ENCODE measurements at regions of chr19 and their contacts with region 1.

Region 1: GRCh38 chr19:12035220-12036153 is at the start of gene ZNF433:
- DNase-seq: no peak
- ATAC-seq: peak; percentile 100
- H3K4me3 ChIP-seq: peak within 1 kb of the TSS; percentile 69 to 70
- H3K27ac ChIP-seq: peak within 1 kb of the TSS; percentile 84
- H3K4me1 ChIP-seq: peaks cover 4% of the 10 kb centered on the region; the same call in 1 of the 2 replicates
- H3K27me3 ChIP-seq: no peaks in the 10 kb centered on the region
- CTCF ChIP-seq: no peak
- total RNA-seq, gene ZNF433: 4.7 TPM

Region 2: DNA sequence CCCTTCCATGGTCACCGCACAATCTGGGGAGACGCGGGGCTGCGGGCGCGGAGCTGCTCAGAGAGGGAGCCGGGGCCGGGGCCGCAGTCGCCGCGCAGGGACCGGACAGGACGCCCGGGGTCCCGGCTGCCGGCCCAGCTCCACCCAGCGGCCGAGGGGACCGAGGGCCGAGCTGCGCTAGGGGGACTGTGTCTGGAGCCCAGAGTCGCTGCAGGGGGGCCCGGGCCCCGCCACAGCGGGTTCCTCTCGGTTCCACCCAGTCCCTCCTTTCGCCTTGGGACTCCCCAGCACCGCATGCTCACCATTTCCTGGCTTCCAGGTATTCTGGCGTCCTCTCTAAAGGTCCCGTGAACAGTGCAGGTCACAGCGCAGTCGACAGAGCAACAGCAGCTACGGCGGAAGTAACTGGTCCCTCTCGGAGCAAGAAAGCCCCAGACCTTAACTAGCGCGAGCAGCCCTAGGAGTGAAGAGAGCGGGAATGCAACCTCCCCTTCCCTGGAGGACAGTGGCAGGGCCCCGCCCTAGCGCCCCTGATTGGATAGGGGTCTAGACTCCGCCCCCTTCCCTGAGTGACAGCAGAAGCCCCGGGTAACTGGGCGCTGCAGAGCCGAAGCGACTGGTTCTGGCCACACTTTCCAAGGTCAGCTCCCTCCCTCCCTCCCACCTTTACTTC is 17.1 kb after region 1 on chr19 and contains the start of gene ZNF878:
- CTCF ChIA-PET with region 1: interaction called, 12 read pairs
- POLR2A ChIA-PET with region 1: no interaction called
- in situ Hi-C with region 1: no loop called
- intact Hi-C with region 1: no loop called
- DNase-seq: no peak
- ATAC-seq: peak; percentile 100
- H3K4me3 ChIP-seq: peak within 1 kb of the TSS; percentile 70 to 83
- H3K27ac ChIP-seq: peak within 1 kb of the TSS; percentile 78
- H3K4me1 ChIP-seq: peaks cover 3% of the 10 kb centered on the region; the same call in 1 of the 2 replicates
- H3K27me3 ChIP-seq: no peaks in the 10 kb centered on the region
- CTCF ChIP-seq: peak; percentile 38; the same call in 1 of the 2 replicates
- total RNA-seq, gene ZNF878: 2.1 TPM

Region 3: DNA sequence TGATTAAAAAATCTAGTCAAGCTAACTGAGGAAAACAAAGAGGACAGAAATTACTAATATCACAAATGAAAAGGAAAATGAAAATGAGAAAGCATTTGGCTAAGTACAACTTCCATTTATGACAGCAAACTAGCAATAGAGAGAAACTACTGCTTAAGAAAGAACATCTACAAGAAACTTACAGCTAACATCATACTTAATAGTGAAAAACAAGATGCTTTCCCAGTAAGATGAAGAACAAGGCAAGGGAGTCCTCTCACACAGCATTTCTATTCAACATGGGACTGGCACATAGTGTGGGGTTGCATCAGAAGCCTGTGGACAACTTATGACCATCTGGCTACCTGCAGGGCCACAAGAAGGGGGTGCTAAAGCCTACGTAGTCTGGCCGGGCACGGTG is 219.9 kb after region 1 on chr19:
- CTCF ChIA-PET with region 1: no interaction called
- POLR2A ChIA-PET with region 1: interaction called, 15 read pairs
- in situ Hi-C with region 1: no loop called
- intact Hi-C with region 1: no loop called
- DNase-seq: no peak
- ATAC-seq: no peak
- H3K4me3 ChIP-seq: no peak overlapping the region
- H3K27ac ChIP-seq: no peak overlapping the region
- H3K4me1 ChIP-seq: no peaks in the 10 kb centered on the region
- H3K27me3 ChIP-seq: no peaks in the 10 kb centered on the region
- CTCF ChIP-seq: no peak